G401 (cell line): ENCODE measurements at regions of chr1 and their contacts with region 1.

Region 1: DNA sequence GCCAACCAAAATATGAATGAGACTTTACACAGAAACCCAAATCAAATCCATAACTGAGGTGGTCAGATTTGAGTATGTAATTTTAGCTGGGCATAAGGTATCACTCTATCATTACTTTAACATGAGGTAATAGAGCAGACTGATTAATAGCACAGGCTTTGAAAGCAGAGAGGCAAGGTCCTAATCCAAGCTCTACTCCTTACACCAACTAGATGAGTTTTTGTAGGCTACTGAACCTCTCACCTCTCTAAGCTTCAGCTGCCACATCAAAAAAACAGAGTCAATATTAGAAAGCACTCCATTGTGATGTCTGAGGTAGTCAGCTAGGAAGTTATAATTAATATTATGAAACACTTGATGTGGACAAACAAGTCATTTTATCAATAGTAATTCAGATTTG is 63.7 kb downstream of the ARID4B start:
- DNase-seq: no peak

Region 2: DNA sequence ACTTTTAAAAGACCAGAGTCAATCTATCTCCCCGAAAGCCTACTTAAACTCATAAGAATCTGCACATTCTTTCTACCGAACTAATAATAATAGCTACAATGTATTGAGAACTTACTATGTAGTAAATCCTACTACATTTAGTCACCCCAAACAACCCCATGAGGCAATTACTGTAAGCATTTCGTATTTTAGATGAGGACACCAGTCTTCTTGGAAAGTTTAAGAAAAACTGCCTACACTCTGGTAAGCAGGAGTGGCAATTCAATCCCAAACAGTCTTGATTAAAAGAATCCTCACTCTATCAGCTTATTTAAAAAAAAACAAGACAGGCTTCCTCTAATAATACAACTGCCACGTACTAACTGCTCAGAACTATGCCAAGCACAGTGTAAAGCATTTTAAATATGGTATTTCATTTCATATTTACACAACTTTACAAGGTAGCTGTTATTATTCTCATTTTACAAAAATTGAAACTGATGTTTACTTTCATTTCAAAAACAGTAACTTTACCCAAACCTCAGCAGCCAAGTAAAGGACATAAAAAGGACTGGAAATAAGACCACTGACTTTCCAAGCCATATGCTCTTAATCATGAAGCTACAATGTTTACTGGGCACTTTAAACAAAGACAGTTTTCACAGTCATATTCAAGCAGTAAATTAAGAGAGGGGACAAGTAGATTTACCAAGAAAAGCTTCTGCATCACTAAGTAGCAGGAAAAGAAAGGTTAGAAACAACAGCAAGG is 49.8 kb after region 1 on chr1:
- in situ Hi-C with region 1: loop called (anchors 5 kb)
- DNase-seq: no peak